GM12878 (cell line): ENCODE measurements at regions of chr16 and their contacts with region 1.

Region 1: GRCh38 chr16:22007509-22008214 is at the start of gene MOSMO:
- DNase-seq: no peak
- ATAC-seq: peak; percentile 88
- H3K4me3 ChIP-seq: peak within 1 kb of the TSS; percentile 98
- H3K27ac ChIP-seq: peak within 1 kb of the TSS; percentile 54
- H3K4me1 ChIP-seq: peaks cover 15% of the 10 kb centered on the region
- H3K27me3 ChIP-seq: no peaks in the 10 kb centered on the region
- CTCF ChIP-seq: no peak
- EP300 ChIP-seq: no peak
- POLR2A ChIP-seq: peak; percentile 75
- RAD21 ChIP-seq: no peak
- polyA plus RNA-seq, gene MOSMO: 2.2 to 7.3 TPM

Region 2: GRCh38 chr16:22023505-22023904 is 15.8 kb after region 1 on chr16:
- CTCF ChIA-PET with region 1: interaction called, 21 read pairs
- POLR2A ChIA-PET with region 1: interaction called, 33 read pairs
- RAD21 ChIA-PET with region 1: interaction called, 25 read pairs
- SMC1A ChIA-PET with region 1: interaction called, 36 read pairs
- in situ Hi-C with region 1: no loop called
- intact Hi-C with region 1: no loop called
- DNase-seq: peak; percentile 44
- ATAC-seq: peak; percentile 94
- H3K4me3 ChIP-seq: no peak overlapping the region
- H3K27ac ChIP-seq: no peak overlapping the region
- H3K4me1 ChIP-seq: peaks cover 23% of the 10 kb centered on the region
- H3K27me3 ChIP-seq: no peaks in the 10 kb centered on the region
- CTCF ChIP-seq: no peak
- EP300 ChIP-seq: peak in 1 of 2 experiments; percentile 28; a peak in 1 of 4 replicates
- POLR2A ChIP-seq: no peak
- RAD21 ChIP-seq: no peak

Region 3: DNA sequence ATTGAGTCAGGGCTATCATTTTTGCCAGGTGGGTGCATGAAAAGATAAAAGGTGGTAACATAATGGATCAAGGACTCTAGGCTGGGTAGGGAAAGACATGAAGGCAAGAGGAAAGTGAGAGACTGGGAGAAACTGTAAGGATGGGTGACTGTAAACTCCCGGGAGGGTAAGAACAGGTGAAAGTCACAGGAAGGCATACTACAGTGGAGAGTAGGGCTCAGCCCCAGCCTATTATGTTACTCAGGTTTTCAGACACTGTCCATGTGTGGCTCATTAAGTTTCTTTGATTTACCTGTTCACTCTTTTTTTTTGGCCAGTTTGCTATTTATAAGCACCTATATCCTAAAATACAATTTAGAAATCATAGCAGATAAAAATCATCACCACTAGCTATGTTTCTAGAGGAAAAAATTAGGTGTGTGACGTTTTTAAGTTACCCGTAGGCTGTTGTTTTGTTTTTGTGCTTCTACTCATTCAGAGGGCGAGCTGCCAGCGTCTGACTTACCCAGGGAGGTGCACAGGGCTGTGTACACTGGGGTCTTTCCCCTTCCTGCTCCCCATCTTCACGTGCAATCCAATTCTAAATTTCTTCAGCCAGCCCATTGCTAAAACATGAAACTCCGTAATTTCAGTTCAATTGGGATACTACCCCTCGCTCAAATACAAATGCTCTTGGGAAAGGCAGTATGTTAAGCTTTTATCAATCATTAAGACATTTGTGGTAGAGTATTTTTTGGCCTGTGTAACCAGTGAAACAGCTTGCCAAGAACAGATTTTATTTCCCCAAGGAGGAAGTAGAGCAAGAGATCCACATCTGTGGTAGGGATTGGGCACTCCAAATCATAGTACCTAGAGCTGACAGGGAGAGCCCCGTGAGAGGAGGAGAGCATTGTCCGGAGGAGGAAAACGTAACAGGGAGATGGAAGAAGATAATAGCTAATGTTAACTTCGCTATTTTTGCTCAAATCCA is 63.0 kb after region 1 on chr16:
- CTCF ChIA-PET with region 1: interaction called, 686 read pairs
- POLR2A ChIA-PET with region 1: interaction called, 10 read pairs
- RAD21 ChIA-PET with region 1: interaction called, 466 read pairs
- SMC1A ChIA-PET with region 1: interaction called, 567 read pairs
- in situ Hi-C with region 1: loop called (anchors 5 kb)
- intact Hi-C with region 1: no loop called
- DNase-seq: no peak
- ATAC-seq: no peak
- H3K4me3 ChIP-seq: no peak overlapping the region
- H3K27ac ChIP-seq: no peak overlapping the region
- H3K4me1 ChIP-seq: no peaks in the 10 kb centered on the region
- H3K27me3 ChIP-seq: no peaks in the 10 kb centered on the region
- CTCF ChIP-seq: no peak
- EP300 ChIP-seq: no peak
- POLR2A ChIP-seq: no peak
- RAD21 ChIP-seq: no peak

Region 4: GRCh38 chr16:22123146-22123545 is 115.5 kb after region 1 on chr16:
- CTCF ChIA-PET with region 1: no interaction called
- POLR2A ChIA-PET with region 1: no interaction called
- RAD21 ChIA-PET with region 1: no interaction called
- SMC1A ChIA-PET with region 1: no interaction called
- in situ Hi-C with region 1: no loop called
- intact Hi-C with region 1: no loop called
- DNase-seq: no peak
- ATAC-seq: peak; percentile 48
- H3K4me3 ChIP-seq: no peak overlapping the region
- H3K27ac ChIP-seq: no peak overlapping the region
- H3K4me1 ChIP-seq: no peaks in the 10 kb centered on the region
- H3K27me3 ChIP-seq: no peaks in the 10 kb centered on the region
- CTCF ChIP-seq: peak in 2 of 3 experiments; percentile 10 to 17; a peak in 2 of 6 replicates
- EP300 ChIP-seq: no peak
- POLR2A ChIP-seq: no peak
- RAD21 ChIP-seq: no peak